HEK293 (cell line): ENCODE measurements at regions of chr11 and their contacts with region 1.

Region 1: DNA sequence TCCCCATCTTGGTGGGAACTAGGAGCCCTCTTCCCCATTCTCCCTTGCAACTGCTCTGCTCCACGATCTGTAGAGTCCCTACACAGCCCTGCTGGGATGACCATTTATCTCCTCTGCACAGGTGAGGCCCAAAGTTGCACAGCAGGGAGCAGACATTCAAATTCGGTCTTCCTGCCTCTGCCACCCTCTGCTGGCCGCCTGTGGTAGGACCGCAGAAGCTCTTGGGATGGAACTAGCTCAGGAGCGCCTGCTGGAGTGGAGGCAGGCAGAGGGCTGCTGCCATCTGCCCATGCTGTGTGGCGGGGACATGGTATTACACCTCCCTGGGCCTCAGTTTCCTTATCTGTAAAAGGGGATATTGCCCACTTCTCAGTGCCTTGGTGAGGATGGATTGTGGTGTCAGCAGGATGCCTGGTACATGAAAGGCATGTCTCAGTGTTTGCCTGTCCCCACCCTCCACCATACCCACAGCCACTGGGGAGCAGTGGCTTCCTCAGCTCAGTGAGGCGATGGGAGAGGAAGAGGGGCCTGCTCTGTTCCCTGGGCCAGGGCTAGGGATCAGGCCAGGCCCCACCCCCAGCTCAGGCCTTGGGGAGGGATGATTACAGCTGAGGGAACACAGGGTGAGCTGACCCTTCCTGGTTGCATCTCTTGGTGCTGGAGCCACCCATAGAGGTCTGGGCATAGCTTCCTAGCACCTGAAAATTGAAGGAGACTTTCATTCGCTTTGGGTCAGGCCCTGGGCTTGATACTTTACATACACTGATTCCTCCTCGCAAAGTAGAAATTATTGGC is 11.3 kb upstream of the OMP start:
- H3K4me3 ChIP-seq: no peak overlapping the region
- H3K27ac ChIP-seq: no peak overlapping the region
- H3K4me1 ChIP-seq: no peaks in the 10 kb centered on the region
- CTCF ChIP-seq: peak; percentile 74; the same call in 1 of the 2 replicates

Region 2: GRCh38 chr11:76734456-76735420 is 356.6 kb before region 1 on chr11:
- CTCF ChIA-PET with region 1: interaction called, 15 read pairs
- POLR2A ChIA-PET with region 1: no interaction called
- H3K4me3 ChIP-seq: no peak overlapping the region
- H3K27ac ChIP-seq: no peak overlapping the region
- H3K4me1 ChIP-seq: no peaks in the 10 kb centered on the region
- CTCF ChIP-seq: no peak

Region 3: DNA sequence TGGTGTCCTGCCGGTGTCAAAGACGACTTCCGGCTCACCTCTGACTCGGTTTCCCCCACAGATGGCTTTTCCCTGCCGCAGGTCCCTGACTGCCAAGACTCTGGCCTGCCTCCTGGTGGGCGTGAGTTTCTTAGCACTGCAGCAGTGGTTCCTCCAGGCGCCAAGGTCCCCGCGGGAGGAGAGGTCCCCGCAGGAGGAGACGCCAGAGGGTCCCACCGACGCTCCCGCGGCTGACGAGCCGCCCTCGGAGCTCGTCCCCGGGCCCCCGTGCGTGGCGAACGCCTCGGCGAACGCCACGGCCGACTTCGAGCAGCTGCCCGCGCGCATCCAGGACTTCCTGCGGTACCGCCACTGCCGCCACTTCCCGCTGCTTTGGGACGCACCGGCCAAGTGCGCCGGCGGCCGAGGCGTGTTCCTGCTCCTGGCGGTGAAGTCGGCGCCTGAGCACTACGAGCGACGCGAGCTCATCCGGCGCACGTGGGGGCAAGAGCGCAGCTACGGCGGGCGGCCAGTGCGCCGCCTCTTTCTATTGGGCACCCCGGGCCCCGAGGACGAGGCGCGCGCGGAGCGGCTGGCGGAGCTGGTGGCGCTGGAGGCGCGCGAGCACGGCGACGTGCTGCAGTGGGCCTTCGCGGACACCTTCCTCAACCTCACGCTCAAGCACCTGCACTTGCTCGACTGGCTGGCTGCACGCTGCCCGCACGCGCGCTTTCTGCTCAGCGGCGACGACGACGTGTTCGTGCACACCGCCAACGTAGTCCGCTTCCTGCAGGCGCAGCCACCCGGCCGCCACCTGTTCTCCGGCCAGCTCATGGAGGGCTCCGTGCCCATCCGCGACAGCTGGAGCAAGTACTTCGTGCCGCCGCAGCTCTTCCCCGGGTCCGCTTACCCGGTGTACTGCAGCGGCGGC is 51.6 kb before region 1 on chr11:
- CTCF ChIA-PET with region 1: interaction called, 22 read pairs
- POLR2A ChIA-PET with region 1: no interaction called
- H3K4me3 ChIP-seq: no peak overlapping the region
- H3K27ac ChIP-seq: no peak overlapping the region
- H3K4me1 ChIP-seq: peaks cover 9% of the 10 kb centered on the region; the same call in 1 of the 2 replicates
- CTCF ChIP-seq: no peak

Region 4: DNA sequence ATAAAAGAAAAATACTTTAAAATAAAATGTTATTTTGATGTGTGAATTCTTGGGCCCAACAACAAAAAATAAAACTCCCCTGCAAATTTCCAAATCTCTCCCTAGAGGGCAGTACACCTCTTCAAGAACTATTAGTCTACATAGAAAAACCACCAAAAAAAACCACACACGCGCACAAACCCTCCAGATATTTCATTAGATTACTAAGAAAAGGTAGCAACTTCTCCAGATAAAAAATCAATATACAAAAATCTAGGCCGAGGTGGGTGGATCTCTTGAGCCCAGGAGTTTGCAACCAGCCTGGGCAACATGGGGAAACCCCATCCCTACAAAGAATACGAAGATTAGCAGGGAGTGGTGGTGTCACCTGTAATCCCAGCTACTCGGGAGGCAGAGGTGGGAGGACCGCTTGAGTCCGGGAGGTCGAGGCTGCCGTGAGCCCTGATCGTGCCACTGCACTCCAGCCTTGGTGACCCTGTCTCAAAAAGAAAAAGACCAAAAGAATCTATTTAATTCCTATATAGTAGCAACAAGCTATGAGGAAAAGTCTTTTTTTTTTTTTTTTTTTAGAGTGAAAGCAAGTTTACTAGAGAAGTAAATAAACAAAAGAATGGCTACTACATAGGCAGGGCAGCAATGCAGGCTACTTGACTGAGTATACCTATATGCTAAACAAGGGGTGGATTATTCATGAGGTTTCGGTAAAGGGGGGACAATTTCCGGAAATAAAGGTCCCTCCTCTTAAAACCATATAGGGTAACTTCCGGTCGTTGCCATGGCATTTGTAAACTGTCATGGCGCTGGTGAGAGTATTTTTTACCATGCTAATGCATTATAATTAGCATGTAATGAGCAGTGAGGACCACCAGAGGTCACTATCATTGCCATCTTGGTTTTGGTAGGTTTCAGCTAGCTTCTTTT is 44.1 kb before region 1 on chr11:
- CTCF ChIA-PET with region 1: interaction called, 61 read pairs
- POLR2A ChIA-PET with region 1: interaction called, 4 read pairs
- H3K4me3 ChIP-seq: peak overlapping the region; percentile 36
- H3K27ac ChIP-seq: no peak overlapping the region
- H3K4me1 ChIP-seq: no peaks in the 10 kb centered on the region
- CTCF ChIP-seq: peak; percentile 54

Region 5: GRCh38 chr11:77066229-77067042 is 24.9 kb before region 1 on chr11 and contains the start of gene CAPN5:
- CTCF ChIA-PET with region 1: interaction called, 14 read pairs
- POLR2A ChIA-PET with region 1: interaction called, 3 read pairs
- H3K4me3 ChIP-seq: peak within 1 kb of the TSS; percentile 64
- H3K27ac ChIP-seq: no peak within 1 kb of the TSS; the same call in 1 of the 2 replicates
- H3K4me1 ChIP-seq: no peaks in the 10 kb centered on the region
- CTCF ChIP-seq: peak; percentile 48

Region 6: DNA sequence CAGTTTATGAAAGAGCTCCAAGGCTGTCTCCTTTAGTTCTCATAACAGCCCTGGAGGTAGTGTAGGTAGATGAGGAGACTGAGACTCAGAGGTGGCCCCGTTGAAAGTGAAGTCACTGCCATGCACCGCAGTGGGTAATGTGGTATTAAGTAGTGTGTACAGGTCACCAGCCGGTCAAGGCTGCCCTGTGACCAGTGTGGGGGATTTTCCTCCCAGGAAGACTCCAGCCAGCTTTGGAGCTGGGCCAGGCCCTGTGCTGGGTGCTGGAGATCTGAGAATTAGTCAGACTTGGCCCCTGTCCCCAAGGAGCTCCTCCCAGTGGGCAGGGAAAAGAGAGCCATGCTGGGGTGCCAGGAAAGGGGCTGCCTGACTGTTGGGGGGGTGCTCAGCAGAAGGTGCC is 16.6 kb after region 1 on chr11:
- CTCF ChIA-PET with region 1: interaction called, 21 read pairs
- POLR2A ChIA-PET with region 1: no interaction called
- H3K4me3 ChIP-seq: no peak overlapping the region
- H3K27ac ChIP-seq: no peak overlapping the region
- H3K4me1 ChIP-seq: no peaks in the 10 kb centered on the region
- CTCF ChIP-seq: no peak

Region 7: DNA sequence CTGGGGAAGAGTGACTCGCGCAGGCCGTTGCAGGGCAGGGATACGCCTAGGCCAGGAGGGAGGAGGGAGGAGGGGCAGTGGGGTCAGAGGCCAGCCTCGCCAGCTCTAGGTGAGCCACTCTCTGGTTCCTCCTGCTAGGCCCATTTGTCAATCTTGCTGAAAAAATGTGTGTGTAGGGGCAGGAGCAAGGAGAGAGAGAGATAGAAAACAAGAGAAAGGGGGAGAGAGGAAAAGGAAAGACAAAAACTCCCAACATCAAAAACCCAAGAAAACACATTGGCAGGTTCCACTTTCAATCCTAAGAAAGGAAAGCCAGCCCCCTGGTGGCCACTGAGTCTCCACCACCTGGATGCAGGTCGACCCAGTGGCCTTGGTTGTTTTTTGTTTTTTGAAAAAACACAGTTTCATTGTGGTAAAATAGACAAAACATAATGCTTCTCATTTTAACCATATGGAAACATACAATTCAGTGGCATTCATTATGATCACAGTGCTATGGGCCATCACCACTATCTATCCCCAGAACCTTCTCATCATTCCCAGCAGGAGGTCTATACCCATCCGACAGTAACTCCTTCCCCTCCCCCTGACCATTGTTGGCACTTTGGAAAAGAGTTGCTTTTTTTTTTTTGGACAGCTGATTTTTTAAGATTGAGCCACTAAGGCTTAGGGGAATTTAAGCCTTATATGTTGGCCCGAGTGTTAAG is 22.2 kb after region 1 on chr11:
- CTCF ChIA-PET with region 1: interaction called, 21 read pairs
- POLR2A ChIA-PET with region 1: no interaction called
- H3K4me3 ChIP-seq: no peak overlapping the region
- H3K27ac ChIP-seq: no peak overlapping the region
- H3K4me1 ChIP-seq: no peaks in the 10 kb centered on the region
- CTCF ChIP-seq: no peak

Region 8: GRCh38 chr11:77267962-77268361 is 176.6 kb after region 1 on chr11:
- CTCF ChIA-PET with region 1: no interaction called
- POLR2A ChIA-PET with region 1: no interaction called
- H3K4me3 ChIP-seq: no peak overlapping the region
- H3K27ac ChIP-seq: no peak overlapping the region
- H3K4me1 ChIP-seq: no peaks in the 10 kb centered on the region
- CTCF ChIP-seq: no peak